Calu3 (cell line): ENCODE measurements at regions of chr19 and their contacts with region 1.

Region 1: GRCh38 chr19:46076951-46077816 is 36.4 kb upstream of the IGFL4 start:
- DNase-seq: peak; percentile 86
- H3K4me3 Mint-ChIP-seq: peak overlapping the region; percentile 63
- H3K27ac Mint-ChIP-seq: no peak overlapping the region
- H3K4me1 Mint-ChIP-seq: peaks cover 14% of the 10 kb centered on the region
- H3K27me3 Mint-ChIP-seq: peaks cover 100% of the 10 kb centered on the region
- CTCF ChIP-seq: peak; percentile 98

Region 2: DNA sequence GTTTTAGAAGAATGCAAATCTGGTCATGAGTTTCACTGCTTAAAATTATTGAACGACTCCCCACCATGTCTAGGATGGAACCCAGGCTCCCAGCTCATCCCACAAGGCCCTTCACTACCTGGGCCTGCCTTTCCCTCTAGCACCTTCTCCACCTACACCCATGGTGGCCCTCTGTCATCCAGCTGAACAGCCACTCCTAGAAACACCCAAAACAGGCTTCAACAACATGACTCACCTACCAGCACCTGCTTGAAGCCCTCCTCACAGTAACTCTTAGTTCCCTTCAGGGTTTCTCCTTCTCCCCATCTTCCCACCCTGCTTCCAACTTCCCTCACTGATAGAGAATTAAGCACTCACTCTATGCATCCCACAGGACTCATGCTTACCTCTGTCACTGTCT is 64.2 kb after region 1 on chr19:
- CTCF ChIA-PET with region 1: no interaction called
- intact Hi-C with region 1: no loop called
- DNase-seq: no peak
- H3K4me3 Mint-ChIP-seq: no peak overlapping the region
- H3K27ac Mint-ChIP-seq: no peak overlapping the region
- H3K4me1 Mint-ChIP-seq: no peaks in the 10 kb centered on the region
- H3K27me3 Mint-ChIP-seq: peaks cover 92% of the 10 kb centered on the region
- CTCF ChIP-seq: no peak

Region 3: DNA sequence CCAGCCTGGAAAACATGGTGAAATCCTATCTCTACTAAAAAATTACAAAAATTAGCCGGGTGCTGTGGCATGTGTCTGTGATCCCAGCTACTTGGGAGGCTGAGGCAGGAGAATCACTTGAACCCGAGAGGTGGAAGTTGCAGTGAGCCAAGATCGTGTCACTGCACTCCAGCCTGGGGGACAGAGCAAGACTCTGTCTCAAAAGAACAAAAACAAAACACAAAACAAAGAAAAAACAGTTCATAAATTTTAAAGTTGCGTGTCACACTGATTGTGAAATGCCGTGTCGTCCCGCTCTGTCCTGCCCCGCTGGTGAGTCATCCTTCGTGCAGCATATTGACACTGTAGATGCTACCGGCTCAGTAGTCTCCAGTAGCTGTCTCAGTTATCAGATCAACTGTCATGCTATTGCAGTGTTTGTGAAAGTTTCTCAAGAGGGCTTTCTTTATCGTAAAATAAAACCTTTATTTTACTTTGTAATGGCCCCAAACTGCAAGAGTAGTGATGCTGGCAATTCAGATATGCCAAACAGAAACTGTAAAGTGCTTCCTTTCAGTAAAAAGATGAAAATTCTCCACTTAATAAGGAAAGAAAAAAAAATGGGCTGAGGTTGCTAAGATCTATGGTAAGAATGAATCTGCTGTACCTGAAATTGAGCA is 115.9 kb after region 1 on chr19:
- CTCF ChIA-PET with region 1: interaction called, 16 read pairs
- intact Hi-C with region 1: loop called (anchors 1 kb)
- DNase-seq: peak; percentile 48
- H3K4me3 Mint-ChIP-seq: no peak overlapping the region
- H3K27ac Mint-ChIP-seq: no peak overlapping the region
- H3K4me1 Mint-ChIP-seq: no peaks in the 10 kb centered on the region
- H3K27me3 Mint-ChIP-seq: peaks cover 100% of the 10 kb centered on the region
- CTCF ChIP-seq: no peak

Region 4: GRCh38 chr19:46265217-46265828 is 188.1 kb after region 1 on chr19:
- CTCF ChIA-PET with region 1: interaction called, 54 read pairs
- intact Hi-C with region 1: loop called (anchors 1 kb)
- DNase-seq: peak; percentile 88
- H3K4me3 Mint-ChIP-seq: no peak overlapping the region
- H3K27ac Mint-ChIP-seq: no peak overlapping the region
- H3K4me1 Mint-ChIP-seq: peaks cover 12% of the 10 kb centered on the region
- H3K27me3 Mint-ChIP-seq: peaks cover 71% of the 10 kb centered on the region
- CTCF ChIP-seq: peak; percentile 83

Region 5: GRCh38 chr19:46270521-46271256 is 193.5 kb after region 1 on chr19:
- CTCF ChIA-PET with region 1: interaction called, 54 read pairs
- intact Hi-C with region 1: loop called (anchors 1 kb)
- DNase-seq: no peak
- H3K4me3 Mint-ChIP-seq: no peak overlapping the region
- H3K27ac Mint-ChIP-seq: no peak overlapping the region
- H3K4me1 Mint-ChIP-seq: no peaks in the 10 kb centered on the region
- H3K27me3 Mint-ChIP-seq: peaks cover 56% of the 10 kb centered on the region
- CTCF ChIP-seq: no peak